ENCODE measurements at regions of chr4 and their contacts with region 1.

Region 1: GRCh38 chr4:167014944-167015343 is 219.3 kb downstream of the SPOCK3 start:
- DNase-seq: no peak
- ATAC-seq: no peak
- H3K4me3 ChIP-seq: no peak overlapping the region
- H3K27ac ChIP-seq: no peak overlapping the region
- H3K4me1 ChIP-seq: no peaks in the 10 kb centered on the region
- H3K27me3 ChIP-seq: no peaks in the 10 kb centered on the region
- CTCF ChIP-seq: no peak
- EP300 ChIP-seq: no peak
- POLR2A ChIP-seq: no peak
- RAD21 ChIP-seq: no peak

Region 2: GRCh38 chr4:168931182-168931650 is 1916.3 kb after region 1 on chr4:
- CTCF ChIA-PET with region 1: no interaction called
- POLR2A ChIA-PET with region 1: no interaction called
- in situ Hi-C with region 1: loop called (anchors 10 kb)
- intact Hi-C with region 1: no loop called
- DNase-seq: no peak
- ATAC-seq: no peak
- H3K4me3 ChIP-seq: no peak overlapping the region
- H3K27ac ChIP-seq: no peak overlapping the region
- H3K4me1 ChIP-seq: no peaks in the 10 kb centered on the region
- H3K27me3 ChIP-seq: no peaks in the 10 kb centered on the region
- CTCF ChIP-seq: no peak
- EP300 ChIP-seq: no peak
- POLR2A ChIP-seq: no peak
- RAD21 ChIP-seq: no peak